Cardiac septum (tissue), 1 donor: ENCODE measurements at regions of chr11 and their contacts with region 1.

Region 1: DNA sequence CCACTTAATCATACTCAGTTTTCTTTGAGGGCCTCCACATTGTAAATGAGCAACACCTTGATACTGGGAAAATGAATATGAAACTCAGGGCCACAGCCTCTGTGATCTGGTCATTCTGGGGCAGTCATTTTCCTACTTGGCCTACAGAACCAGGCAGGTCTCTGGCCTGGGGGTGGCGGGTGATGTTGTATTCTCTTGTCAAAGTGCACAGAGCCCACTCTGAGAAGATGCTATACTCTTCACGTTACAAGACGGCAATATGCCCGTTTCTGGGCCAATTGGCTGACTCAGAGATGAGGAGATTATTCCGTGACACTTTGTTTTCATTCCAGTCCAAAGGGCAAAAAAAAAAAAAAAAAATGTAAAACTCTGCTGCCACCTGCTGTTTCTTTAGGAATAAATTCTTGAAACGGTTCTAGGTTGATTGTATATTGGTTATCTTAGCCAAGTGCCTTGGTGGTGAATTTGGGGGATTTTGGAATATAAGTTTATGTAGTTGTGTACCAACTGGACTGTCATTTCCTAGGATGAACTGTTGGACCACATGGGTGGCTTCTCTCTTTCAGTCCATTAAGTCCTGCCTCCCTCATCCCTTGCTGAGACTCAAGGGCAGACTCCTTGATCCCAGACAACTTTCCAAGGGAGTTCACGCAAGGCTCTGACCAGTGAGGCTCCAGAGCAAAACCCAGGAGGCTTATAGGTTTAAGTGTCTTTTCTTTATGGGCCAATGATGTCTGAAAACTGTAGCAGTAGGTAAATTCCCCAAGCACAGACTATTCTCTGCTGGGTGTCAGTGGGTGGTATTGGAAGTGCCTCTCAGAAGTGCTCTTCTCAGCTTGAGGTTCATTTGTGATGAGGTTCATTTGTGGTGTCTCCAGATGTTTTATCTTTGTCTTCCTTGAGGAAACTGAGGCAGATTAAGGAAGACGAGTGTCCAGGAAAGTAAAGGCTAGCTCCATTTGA is 18.2 kb downstream of the ADM start:
- DNase-seq: no peak

Region 2: DNA sequence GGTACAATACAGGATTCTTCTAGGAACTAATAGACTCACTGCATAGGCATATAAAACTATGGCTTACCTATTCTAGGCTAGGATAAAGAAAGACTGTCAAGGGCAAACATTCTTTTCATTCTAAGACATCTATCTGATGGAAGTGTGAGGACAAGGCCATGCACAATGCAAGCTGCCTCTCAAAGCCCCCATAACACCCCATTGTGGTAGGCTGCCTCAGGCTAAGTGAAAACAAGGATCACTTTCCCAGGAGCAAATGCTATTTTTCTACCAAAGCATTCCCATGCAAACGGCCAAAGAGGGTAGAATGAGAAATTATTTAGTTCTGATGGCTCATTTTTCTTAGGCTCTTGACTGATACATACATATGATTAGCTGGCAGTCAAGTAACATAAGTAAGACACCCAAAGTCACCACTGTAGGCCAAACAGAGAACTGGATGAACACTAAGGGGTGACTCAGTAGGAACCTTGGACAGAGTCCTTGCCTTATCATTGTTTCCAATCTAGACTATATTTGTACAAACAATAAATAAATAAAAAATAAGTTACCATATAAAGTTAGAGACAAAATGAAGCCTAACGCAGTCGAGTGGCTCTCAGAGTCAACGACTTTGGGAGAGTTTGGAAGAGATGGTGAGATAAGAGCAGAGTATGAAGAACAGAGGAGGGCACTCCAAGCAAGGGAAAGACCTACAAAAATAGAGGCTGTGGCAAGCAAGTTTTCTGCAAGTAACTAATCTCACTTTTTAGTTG is 332.7 kb before region 1 on chr11:
- intact Hi-C with region 1: loop called (anchors 5 kb)
- DNase-seq: no peak

Region 3: DNA sequence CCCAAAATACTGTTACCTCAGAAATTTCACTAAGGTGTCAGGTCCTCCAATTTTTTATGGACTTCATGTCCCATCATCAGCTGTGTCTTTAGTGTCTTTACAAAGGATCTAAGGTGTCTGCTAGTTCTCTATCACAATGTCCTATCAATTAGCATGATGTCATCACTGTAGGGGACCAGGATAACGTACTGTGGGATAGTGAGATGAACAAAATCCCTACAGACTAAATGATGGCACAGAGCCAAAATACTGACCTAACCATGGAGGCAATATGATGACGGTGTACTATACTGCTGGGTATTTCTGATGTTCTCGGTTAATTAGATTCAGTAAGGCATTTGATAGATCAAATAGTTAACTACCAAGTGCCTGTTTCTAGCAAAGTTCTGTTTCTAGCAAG is 111.6 kb before region 1 on chr11:
- intact Hi-C with region 1: no loop called
- DNase-seq: no peak